HEK293 (cell line): ENCODE measurements at regions of chr6 and their contacts with region 1.

Region 1: GRCh38 chr6:125974214-125974866 is 12.0 kb upstream of the TRMT11 start:
- H3K4me3 ChIP-seq: no peak overlapping the region
- H3K27ac ChIP-seq: no peak overlapping the region
- H3K4me1 ChIP-seq: no peaks in the 10 kb centered on the region
- CTCF ChIP-seq: no peak

Region 2: DNA sequence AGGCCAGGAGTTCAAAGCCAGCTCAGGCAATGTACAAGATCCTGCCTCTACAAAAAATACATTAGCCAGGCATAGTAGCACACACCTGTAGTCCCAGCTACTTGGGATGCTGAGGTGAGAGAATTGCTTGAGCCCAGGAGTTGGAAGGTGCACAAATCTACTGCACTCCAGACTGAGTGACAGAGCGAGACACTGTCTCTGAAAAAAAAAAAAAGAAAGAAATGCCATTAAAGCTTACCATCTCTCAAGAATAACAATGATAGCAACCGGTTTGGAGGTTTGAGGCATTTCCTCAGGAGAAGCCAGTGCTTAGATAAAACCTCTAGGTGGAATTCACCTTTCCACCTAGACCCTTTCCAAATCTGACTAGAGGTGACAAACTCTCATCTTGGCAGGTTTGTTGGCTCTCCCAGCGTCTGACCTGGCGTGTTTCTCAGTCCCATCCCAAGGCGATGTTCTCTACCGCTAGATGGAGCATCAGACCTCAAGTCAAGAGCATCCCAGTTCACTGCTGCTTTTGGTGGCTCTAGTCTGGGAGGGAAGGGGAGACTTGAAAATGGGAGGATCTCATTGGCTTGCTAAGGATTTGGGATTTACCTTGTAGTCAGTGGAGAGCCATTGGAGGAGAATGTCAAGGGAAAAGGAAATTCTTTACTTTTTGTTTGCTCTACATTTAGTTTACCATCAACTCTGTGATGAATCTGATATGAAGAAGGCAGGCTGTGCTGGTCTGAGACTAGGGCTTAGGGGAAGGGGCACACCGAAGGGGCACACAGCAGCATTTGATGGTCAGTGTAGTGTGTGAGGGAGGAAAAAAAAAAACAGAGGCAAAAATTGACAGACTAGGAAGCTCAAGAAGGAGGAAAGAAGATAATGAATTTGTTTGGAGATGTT is 115.7 kb before region 1 on chr6:
- CTCF ChIA-PET with region 1: interaction called, 14 read pairs
- POLR2A ChIA-PET with region 1: no interaction called
- H3K4me3 ChIP-seq: no peak overlapping the region
- H3K27ac ChIP-seq: no peak overlapping the region
- H3K4me1 ChIP-seq: peaks cover 2% of the 10 kb centered on the region; the same call in 1 of the 2 replicates
- CTCF ChIP-seq: peak; percentile 68

Region 3: DNA sequence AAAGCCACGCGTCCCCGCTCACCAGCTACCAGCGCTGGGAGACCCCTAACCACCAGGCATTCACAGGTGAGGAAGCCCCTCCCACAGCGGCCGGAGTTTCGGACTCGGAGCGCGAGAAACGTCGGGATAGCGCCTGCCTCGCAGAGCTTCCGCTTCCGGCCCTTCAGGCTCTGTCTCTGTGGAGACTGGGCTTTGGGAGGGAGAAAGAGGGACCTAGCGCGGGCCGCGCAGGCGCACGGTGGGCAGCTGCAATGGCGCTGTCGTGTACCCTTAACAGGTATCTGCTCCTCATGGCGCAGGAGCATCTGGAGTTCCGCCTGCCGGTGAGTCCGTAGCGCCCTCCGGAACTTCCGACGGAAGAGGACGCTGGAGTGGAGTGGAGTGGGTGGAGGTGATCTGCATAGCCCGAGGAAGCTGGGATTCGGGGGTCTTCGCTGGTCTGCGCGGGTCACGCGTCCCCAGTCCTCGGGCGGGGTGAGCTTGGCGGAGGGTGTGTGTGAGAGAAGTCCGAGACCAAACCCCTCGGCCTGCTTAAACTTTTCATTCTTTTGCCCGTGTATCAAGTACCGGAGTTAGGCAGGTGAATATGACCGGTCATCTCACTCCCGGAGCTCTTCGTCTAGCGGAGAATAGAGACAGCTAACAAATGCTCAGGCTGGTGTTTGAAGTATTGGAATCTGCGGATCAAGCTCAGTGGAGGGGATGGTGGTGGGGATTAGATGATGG is 12.1 kb after region 1 on chr6 and contains the start of gene TRMT11:
- CTCF ChIA-PET with region 1: interaction called, 40 read pairs
- POLR2A ChIA-PET with region 1: interaction called, 5 read pairs
- H3K4me3 ChIP-seq: peak within 1 kb of the TSS; percentile 81
- H3K27ac ChIP-seq: peak within 1 kb of the TSS; percentile 63
- H3K4me1 ChIP-seq: peaks cover 5% of the 10 kb centered on the region
- CTCF ChIP-seq: peak; percentile 89

Region 4: GRCh38 chr6:125995972-125996580 is 21.7 kb after region 1 on chr6:
- CTCF ChIA-PET with region 1: interaction called, 16 read pairs
- POLR2A ChIA-PET with region 1: no interaction called
- H3K4me3 ChIP-seq: no peak overlapping the region
- H3K27ac ChIP-seq: no peak overlapping the region
- H3K4me1 ChIP-seq: peaks cover 21% of the 10 kb centered on the region; the same call in 1 of the 2 replicates
- CTCF ChIP-seq: peak; percentile 58

Region 5: GRCh38 chr6:126701676-126702560 is 727.6 kb after region 1 on chr6:
- CTCF ChIA-PET with region 1: no interaction called
- POLR2A ChIA-PET with region 1: no interaction called
- H3K4me3 ChIP-seq: no peak overlapping the region
- H3K27ac ChIP-seq: no peak overlapping the region
- H3K4me1 ChIP-seq: no peaks in the 10 kb centered on the region
- CTCF ChIP-seq: no peak